ENCODE measurements at regions of chr4 and their contacts with region 1.

Region 1: DNA sequence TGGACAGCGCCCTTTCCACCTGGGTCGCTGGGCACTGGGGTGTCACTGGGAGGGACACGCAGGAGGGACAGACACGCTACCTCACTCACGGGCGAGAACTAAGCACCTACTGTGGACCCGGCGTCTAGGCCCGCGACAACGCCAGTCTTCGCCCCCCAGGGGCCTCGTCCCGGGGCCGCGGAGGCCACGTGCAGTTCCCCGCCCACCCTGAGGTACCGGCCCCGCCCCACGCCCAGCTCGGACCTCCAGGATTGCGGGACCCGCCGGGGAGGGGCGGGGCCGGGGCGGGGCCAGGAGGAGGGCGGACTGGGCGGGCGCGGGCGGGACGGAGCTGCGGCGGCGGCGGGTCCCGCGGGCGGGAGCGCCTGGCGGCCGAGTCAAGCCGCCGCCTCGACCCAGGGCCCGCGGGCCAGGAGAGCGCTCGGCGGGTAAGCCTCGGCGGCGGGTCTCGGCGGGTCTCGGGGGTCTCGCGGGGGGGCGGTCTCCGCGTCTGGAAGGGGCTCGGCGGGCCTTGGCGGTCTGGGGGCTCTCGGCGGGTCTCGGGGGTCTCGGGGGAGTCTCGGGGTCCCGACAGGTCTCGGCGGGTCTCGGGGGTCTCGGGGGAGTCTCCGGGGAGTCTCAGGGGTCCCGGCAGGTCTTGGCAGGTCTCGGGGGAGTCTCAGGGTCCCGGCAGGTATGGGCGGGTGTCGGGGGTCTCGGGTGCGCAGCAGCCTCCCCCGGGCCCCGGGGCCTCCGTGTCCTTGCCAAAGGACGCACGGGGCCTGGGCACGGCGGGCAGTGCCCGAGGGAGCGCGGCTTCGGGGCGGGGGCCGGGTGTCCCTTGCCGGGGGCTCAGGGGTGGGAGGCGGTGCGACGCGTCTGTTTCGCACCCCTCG is at the start of gene SH3BP2:
- DNase-seq: peak; percentile 63
- ATAC-seq: peak; percentile 41
- H3K4me3 ChIP-seq: peak within 1 kb of the TSS; percentile 66 to 75 (median 75)
- H3K27ac ChIP-seq: peak within 1 kb of the TSS; percentile 67
- H3K4me1 ChIP-seq: peaks cover 93% of the 10 kb centered on the region
- H3K27me3 ChIP-seq: no peaks in the 10 kb centered on the region
- CTCF ChIP-seq: no peak
- EP300 ChIP-seq: no peak
- POLR2A ChIP-seq: no peak
- RAD21 ChIP-seq: no peak
- total RNA-seq, gene SH3BP2: 7.0 and 16.9 TPM in 2 replicates

Region 2: DNA sequence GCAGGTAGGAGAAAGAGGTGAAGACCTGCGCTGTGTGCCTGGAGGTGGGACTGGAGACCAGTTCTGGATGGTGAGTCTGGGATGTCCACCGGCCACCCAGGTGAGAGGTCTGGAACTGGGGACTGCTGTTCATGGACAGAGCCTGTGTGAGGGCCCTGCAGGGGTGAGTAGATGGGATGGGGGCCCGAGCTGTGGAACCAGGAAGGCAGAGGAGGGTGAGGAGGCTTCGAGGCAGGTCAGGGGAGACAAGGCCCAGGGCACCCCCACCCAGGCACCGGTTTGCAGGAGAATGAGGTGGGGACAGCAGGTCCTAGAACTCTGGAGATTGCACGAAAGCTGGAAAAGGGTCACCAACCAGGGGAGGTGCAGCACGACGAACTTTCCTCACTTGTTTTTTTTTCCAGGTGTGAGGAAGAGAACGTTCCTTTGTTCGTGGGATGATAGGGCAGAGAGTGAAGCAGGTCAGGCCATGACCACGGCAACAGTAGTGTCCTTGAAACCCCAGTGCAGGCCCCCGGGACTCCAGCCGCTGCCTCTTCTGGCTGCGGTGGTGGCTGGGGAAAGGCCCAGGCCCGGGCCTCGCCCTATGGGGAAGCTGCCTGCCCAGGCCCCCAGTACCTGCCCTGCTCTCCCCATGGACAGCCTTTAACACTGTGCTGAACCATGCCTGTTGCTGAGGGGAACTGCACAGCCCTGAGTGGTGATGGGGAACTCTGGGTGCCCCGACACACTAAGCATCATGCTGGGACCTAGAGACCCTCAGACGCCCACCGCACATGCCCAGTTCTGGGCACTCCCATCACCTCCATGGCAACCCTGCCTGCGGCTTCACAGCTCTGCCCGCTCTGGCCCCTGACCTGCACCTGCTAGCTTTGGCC is 59.7 kb before region 1 on chr4:
- CTCF ChIA-PET with region 1: no interaction called
- POLR2A ChIA-PET with region 1: interaction called, 3 read pairs
- in situ Hi-C with region 1: no loop called
- intact Hi-C with region 1: loop called (anchors 2 kb)
- DNase-seq: peak; percentile 70
- ATAC-seq: peak; percentile 88
- H3K4me3 ChIP-seq: peak overlapping the region in 1 of 3 experiments; percentile 1; a peak in 1 of 6 replicates
- H3K27ac ChIP-seq: peak overlapping the region; percentile 53
- H3K4me1 ChIP-seq: peaks cover 17% of the 10 kb centered on the region
- H3K27me3 ChIP-seq: no peaks in the 10 kb centered on the region
- CTCF ChIP-seq: no peak; the same call in 1 of the 2 replicates
- EP300 ChIP-seq: no peak
- POLR2A ChIP-seq: peak in 1 of 2 experiments; percentile 14; a peak in 1 of 4 replicates
- RAD21 ChIP-seq: no peak

Region 3: GRCh38 chr4:2755837-2756694 is 36.9 kb before region 1 on chr4 and contains the start of gene TNIP2:
- CTCF ChIA-PET with region 1: no interaction called
- POLR2A ChIA-PET with region 1: interaction called, 60 read pairs
- in situ Hi-C with region 1: loop called (anchors 5 kb)
- intact Hi-C with region 1: loop called (anchors 1 kb)
- DNase-seq: peak; percentile 64
- ATAC-seq: peak; percentile 87
- H3K4me3 ChIP-seq: peak within 1 kb of the TSS; percentile 64 to 88 (median 82)
- H3K27ac ChIP-seq: peak within 1 kb of the TSS; percentile 76
- H3K4me1 ChIP-seq: peaks cover 61% of the 10 kb centered on the region
- H3K27me3 ChIP-seq: no peaks in the 10 kb centered on the region
- CTCF ChIP-seq: peak; percentile 50; the same call in 1 of the 2 replicates
- EP300 ChIP-seq: no peak
- POLR2A ChIP-seq: peak; percentile 71 to 75; a peak in 3 of 4 replicates
- RAD21 ChIP-seq: peak; percentile 95
- total RNA-seq, gene TNIP2: 28.5 and 38.0 TPM in 2 replicates

Region 4: GRCh38 chr4:2761035-2761923 is 31.7 kb before region 1 on chr4:
- CTCF ChIA-PET with region 1: no interaction called
- POLR2A ChIA-PET with region 1: interaction called, 60 read pairs
- in situ Hi-C with region 1: loop called (anchors 5 kb)
- intact Hi-C with region 1: loop called (anchors 1 kb)
- DNase-seq: peak; percentile 86
- ATAC-seq: peak; percentile 87
- H3K4me3 ChIP-seq: peak overlapping the region; percentile 44 to 73 (median 63)
- H3K27ac ChIP-seq: peak overlapping the region; percentile 80
- H3K4me1 ChIP-seq: peaks cover 45% of the 10 kb centered on the region
- H3K27me3 ChIP-seq: no peaks in the 10 kb centered on the region
- CTCF ChIP-seq: peak; percentile 58
- EP300 ChIP-seq: peak in 1 of 2 experiments; percentile 36; a peak in 1 of 4 replicates
- POLR2A ChIP-seq: peak; percentile 36 to 54; a peak in 3 of 4 replicates
- RAD21 ChIP-seq: peak; percentile 28; the same call in 1 of the 2 replicates

Region 5: GRCh38 chr4:2825740-2826139 is 32.8 kb after region 1 on chr4:
- CTCF ChIA-PET with region 1: no interaction called
- POLR2A ChIA-PET with region 1: no interaction called
- in situ Hi-C with region 1: no loop called
- intact Hi-C with region 1: no loop called
- DNase-seq: no peak
- ATAC-seq: no peak
- H3K4me3 ChIP-seq: no peak overlapping the region
- H3K27ac ChIP-seq: no peak overlapping the region
- H3K4me1 ChIP-seq: no peaks in the 10 kb centered on the region
- H3K27me3 ChIP-seq: no peaks in the 10 kb centered on the region
- CTCF ChIP-seq: no peak
- EP300 ChIP-seq: no peak
- POLR2A ChIP-seq: no peak
- RAD21 ChIP-seq: no peak

Region 6: GRCh38 chr4:2843263-2843940 is 50.5 kb after region 1 on chr4 and contains the start of gene ADD1:
- CTCF ChIA-PET with region 1: no interaction called
- POLR2A ChIA-PET with region 1: no interaction called
- in situ Hi-C with region 1: no loop called
- intact Hi-C with region 1: loop called (anchors 5 kb)
- DNase-seq: peak; percentile 81
- ATAC-seq: peak; percentile 95
- H3K4me3 ChIP-seq: peak within 1 kb of the TSS; percentile 86 to 99 (median 87)
- H3K27ac ChIP-seq: peak within 1 kb of the TSS; percentile 72
- H3K4me1 ChIP-seq: peaks cover 46% of the 10 kb centered on the region
- H3K27me3 ChIP-seq: no peaks in the 10 kb centered on the region; a peak in 1 of 5 replicates
- CTCF ChIP-seq: no peak
- EP300 ChIP-seq: 0 out of 4 replicates have a peak, but pooled peaks of 1 of the 2 experiments have one; percentile 23
- POLR2A ChIP-seq: peak; percentile 76 to 86
- RAD21 ChIP-seq: peak; percentile 49
- total RNA-seq, gene ADD1: 122 and 133 TPM in 2 replicates

Measured in HepG2 (cell line).